ENCODE measurements at regions of chr17 and their contacts with region 1.

Region 1: GRCh38 chr17:41199421-41200078 is 9.9 kb downstream of the KRTAP9-1 start:
- H3K4me3 Mint-ChIP-seq: no peak overlapping the region
- H3K27ac Mint-ChIP-seq: no peak overlapping the region
- H3K4me1 Mint-ChIP-seq: no peaks in the 10 kb centered on the region
- H3K27me3 Mint-ChIP-seq: peaks cover 12% of the 10 kb centered on the region

Region 2: GRCh38 chr17:40915199-40915661 is 284.3 kb before region 1 on chr17:
- intact Hi-C with region 1: loop called (anchors 10 kb)
- H3K4me3 Mint-ChIP-seq: no peak overlapping the region
- H3K27ac Mint-ChIP-seq: no peak overlapping the region
- H3K4me1 Mint-ChIP-seq: peaks cover 46% of the 10 kb centered on the region
- H3K27me3 Mint-ChIP-seq: no peaks in the 10 kb centered on the region

Measured in dendritic cell treated with granulocyte-macrophage colony-stimulating factor and Interleukin-4, amounts not matched to agents 40 ng/mL and 50 ng/mL, for 4 days (primary cell).